Sciatic nerve (tissue), 2 donors: ENCODE measurements at regions of chr10 and their contacts with region 1.

Region 1: DNA sequence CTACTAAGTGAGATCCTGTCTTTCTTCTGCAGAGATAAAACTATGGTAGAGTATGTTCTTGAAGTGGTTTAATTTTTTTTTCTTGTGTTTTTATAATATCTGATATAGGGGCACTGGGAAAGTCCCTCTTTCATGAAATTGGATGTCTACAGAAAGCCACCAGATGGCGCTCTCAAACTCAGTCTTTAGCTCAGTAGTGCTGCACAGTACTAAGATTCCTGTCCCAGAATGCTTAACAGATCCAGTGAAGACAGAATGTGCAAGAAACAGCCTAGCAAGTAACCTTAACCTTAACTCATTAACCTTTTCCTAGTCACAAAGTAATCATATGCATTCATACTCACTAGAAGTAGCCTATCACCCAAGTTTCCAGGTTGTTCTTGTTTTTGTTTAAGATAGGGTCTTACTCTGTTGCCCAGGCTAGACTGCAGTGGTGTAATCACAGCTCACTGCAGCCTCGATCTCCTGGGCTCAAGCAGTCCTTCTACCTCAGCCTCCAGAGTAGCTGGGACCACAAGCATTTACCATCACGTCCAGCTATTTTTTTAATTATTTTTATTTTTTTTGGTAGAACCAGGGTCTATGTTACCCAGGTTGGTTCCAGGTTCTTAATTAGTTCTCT is 56.7 kb downstream of the IDE start:
- DNase-seq: peak; percentile 72
- ATAC-seq: peak; percentile 88

Region 2: GRCh38 chr10:92407305-92408016 is 109.7 kb before region 1 on chr10:
- intact Hi-C with region 1: no loop called
- DNase-seq: no peak
- ATAC-seq: peak; percentile 32

Region 3: GRCh38 chr10:92573798-92574547 is 56.8 kb after region 1 on chr10 and contains the start of gene IDE:
- intact Hi-C with region 1: loop called (anchors 5 kb)
- DNase-seq: peak; percentile 89
- ATAC-seq: peak; percentile 96
- total RNA-seq, gene IDE: 34.8 TPM

Region 4: GRCh38 chr10:93386631-93387369 is 869.7 kb after region 1 on chr10:
- intact Hi-C with region 1: no loop called
- DNase-seq: no peak
- ATAC-seq: peak; percentile 76